Endothelial cell of umbilical vein (primary cell): ENCODE measurements at regions of chr3 and their contacts with region 1.

Region 1: GRCh38 chr3:108406661-108407206 is 103.7 kb downstream of the MYH15 start:
- DNase-seq: peak; percentile 60
- H3K4me3 ChIP-seq: no peak overlapping the region
- H3K27ac ChIP-seq: no peak overlapping the region
- H3K4me1 ChIP-seq: no peaks in the 10 kb centered on the region
- H3K27me3 ChIP-seq: no peaks in the 10 kb centered on the region
- CTCF ChIP-seq: peak; percentile 48 to 52
- POLR2A ChIP-seq: no peak

Region 2: GRCh38 chr3:108040481-108040880 is 366.3 kb before region 1 on chr3:
- CTCF ChIA-PET with region 1: no interaction called
- POLR2A ChIA-PET with region 1: no interaction called
- dilution Hi-C with region 1: no loop called
- intact Hi-C with region 1: no loop called
- DNase-seq: no peak
- H3K4me3 ChIP-seq: no peak overlapping the region
- H3K27ac ChIP-seq: no peak overlapping the region
- H3K4me1 ChIP-seq: peaks cover 17% of the 10 kb centered on the region
- H3K27me3 ChIP-seq: no peaks in the 10 kb centered on the region
- CTCF ChIP-seq: no peak
- POLR2A ChIP-seq: no peak

Region 3: GRCh38 chr3:108153451-108153981 is 253.2 kb before region 1 on chr3:
- CTCF ChIA-PET with region 1: interaction called, 8 read pairs
- POLR2A ChIA-PET with region 1: no interaction called
- dilution Hi-C with region 1: no loop called
- intact Hi-C with region 1: loop called (anchors 1 kb)
- DNase-seq: peak; percentile 43
- H3K4me3 ChIP-seq: no peak overlapping the region
- H3K27ac ChIP-seq: no peak overlapping the region
- H3K4me1 ChIP-seq: peaks cover 10% of the 10 kb centered on the region
- H3K27me3 ChIP-seq: no peaks in the 10 kb centered on the region
- CTCF ChIP-seq: peak; percentile 18 to 30
- POLR2A ChIP-seq: no peak